ENCODE measurements at regions of chr7 and their contacts with region 1.

Region 1: DNA sequence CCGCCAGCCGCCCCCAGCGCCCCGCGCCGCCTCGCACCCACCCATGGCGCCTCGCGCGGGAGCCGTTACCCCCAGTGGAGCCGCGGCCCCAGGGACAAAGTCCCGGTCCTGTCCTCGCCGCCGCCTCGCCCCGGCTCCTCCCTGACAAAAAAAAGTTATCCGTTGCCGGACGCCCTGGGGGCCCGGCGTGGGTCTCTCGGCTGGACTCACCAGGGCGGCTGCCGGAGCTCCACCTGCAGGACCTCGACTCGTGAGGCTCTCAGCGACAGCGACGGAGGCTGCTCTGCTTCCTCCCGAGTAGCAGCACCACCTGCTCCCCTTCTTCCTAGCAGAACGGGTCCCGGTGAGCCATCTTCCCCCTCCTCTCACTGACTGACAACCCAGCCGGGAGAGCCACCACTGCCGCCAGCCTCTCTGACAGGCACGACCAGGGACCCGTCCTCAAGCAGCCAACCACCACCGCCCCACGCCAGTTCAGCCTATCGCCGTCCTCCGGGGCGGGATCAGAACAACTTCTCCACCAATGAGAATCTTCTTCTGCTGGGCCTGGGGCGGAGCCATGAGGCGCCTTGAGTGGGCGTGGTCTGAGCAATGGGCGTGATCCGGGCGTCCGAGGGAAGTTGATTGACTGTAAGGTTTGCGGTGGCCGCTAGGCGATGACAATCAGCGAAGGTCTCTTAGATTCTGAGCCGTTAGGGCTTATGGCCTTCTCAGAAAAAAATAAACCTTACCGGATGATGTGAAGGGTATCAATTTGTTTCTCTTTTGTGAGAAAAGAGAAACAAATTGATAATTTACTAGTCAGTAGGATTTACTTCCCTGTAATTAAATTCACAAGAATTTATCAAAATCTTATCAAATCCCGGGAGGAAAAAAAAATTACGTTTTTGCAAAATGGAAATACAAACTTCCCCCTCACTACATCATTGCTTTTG is at the start of gene HYCC1:
- DNase-seq: peak; percentile 95
- H3K4me3 ChIP-seq: peak within 1 kb of the TSS; percentile 83 to 99 (median 91)
- H3K27ac ChIP-seq: peak within 1 kb of the TSS; percentile 85 to 96 (median 88)
- H3K4me1 ChIP-seq: peaks cover 17 to 48% (median 21%) of the 10 kb centered on the region in 3 donors
- H3K27me3 ChIP-seq: no peaks in the 10 kb centered on the region
- CTCF ChIP-seq: peak in 5 of 6 experiments; percentile 58 to 86 (median 77)
- POLR2A ChIP-seq: peak in 3 of 4 donors; percentile 90 to 100 (median 99)
- total RNA-seq, gene HYCC1: 19.8 to 51.2 (median 34.1) TPM

Region 2: GRCh38 chr7:22477876-22478450 is 536.0 kb before region 1 on chr7:
- intact Hi-C with region 1: no loop called
- DNase-seq: no peak
- H3K4me3 ChIP-seq: no peak overlapping the region
- H3K27ac ChIP-seq: no peak overlapping the region
- H3K4me1 ChIP-seq: peaks cover 0 to 7% (median 5%) of the 10 kb centered on the region in 3 donors
- H3K27me3 ChIP-seq: no peaks in the 10 kb centered on the region
- CTCF ChIP-seq: no peak
- POLR2A ChIP-seq: no peak

Region 3: GRCh38 chr7:22765609-22766008 is 248.4 kb before region 1 on chr7:
- intact Hi-C with region 1: no loop called
- DNase-seq: no peak
- H3K4me3 ChIP-seq: no peak overlapping the region
- H3K27ac ChIP-seq: no peak overlapping the region
- H3K4me1 ChIP-seq: no peaks in the 10 kb centered on the region
- H3K27me3 ChIP-seq: no peaks in the 10 kb centered on the region
- CTCF ChIP-seq: no peak
- POLR2A ChIP-seq: no peak

Region 4: GRCh38 chr7:22854158-22855048 is 159.6 kb before region 1 on chr7:
- intact Hi-C with region 1: loop called (anchors 10 kb)
- DNase-seq: peak; percentile 16
- H3K4me3 ChIP-seq: peak overlapping the region; percentile 65 to 92 (median 70)
- H3K27ac ChIP-seq: peak overlapping the region; percentile 87 to 97 (median 92)
- H3K4me1 ChIP-seq: peaks cover 22 to 57% (median 35%) of the 10 kb centered on the region in 3 donors
- H3K27me3 ChIP-seq: no peaks in the 10 kb centered on the region
- CTCF ChIP-seq: peak in 4 of 6 experiments; percentile 43 to 56 (median 55)
- POLR2A ChIP-seq: peak in 2 of 4 donors; percentile 75 to 76

Measured in esophagus squamous epithelium (tissue), 5 donors.